CD8-positive, alpha-beta T cell (primary cell): ENCODE measurements at regions of chr15 and their contacts with region 1.

Region 1: DNA sequence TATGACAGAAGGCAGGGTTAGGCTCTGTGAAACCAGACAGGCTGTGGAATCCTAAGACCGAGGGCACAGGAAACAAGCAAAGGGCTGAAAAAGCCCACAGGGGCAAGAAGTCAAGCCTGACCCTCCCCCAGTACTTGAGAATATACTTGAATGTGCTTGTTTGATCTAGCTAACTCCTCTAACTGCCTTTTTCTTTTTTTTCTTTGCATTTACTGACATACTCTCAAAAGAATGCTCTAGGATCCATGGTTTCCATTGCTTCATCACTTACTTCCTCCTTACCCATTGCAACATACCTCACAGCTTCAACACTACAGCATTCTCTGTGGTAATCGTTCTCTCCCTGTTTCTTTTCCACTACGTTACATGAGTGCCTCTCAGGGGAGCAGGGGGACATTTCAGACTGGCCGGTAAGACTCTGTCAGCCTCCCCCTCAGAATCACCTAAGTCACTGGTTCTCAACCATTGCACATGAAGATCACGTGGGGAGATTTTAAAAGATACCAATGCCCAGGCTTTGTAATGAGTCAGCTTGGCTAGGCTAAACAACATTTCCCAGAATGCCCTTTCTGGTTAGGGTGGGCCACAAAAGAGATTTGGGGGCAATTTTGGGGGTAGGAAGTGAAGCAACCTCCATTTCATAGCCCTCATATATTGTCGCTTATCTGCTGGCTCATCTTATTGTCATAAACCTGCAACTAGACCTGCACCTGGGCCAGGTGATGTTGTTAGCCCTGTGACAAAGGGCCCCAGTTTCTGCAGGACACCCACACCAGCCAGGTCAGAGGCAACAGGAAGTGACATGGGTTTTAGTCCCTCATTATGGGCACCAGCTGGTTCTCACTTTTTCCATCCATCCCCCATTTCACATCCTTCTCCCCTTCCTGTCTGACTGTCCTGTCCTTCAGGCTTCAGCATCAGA is 24.6 kb upstream of the RSL24D1 start:
- DNase-seq: peak in 4 of 9 experiments; percentile 25 to 64 (median 36)
- ATAC-seq: peak; percentile 27
- H3K4me3 ChIP-seq: no peak overlapping the region
- H3K4me3 Mint-ChIP-seq: peak overlapping the region; percentile 0
- H3K27ac ChIP-seq: peak overlapping the region in 1 of 2 experiments; percentile 66
- H3K27ac Mint-ChIP-seq: peak overlapping the region; percentile 85
- H3K4me1 ChIP-seq: peaks cover 52% of the 10 kb centered on the region
- H3K4me1 Mint-ChIP-seq: peaks cover 59% of the 10 kb centered on the region
- H3K27me3 ChIP-seq: no peaks in the 10 kb centered on the region
- H3K27me3 Mint-ChIP-seq: no peaks in the 10 kb centered on the region
- CTCF ChIP-seq: no peak

Region 2: GRCh38 chr15:55008421-55008820 is 212.9 kb before region 1 on chr15:
- CTCF ChIA-PET with region 1: no interaction called
- POLR2A ChIA-PET with region 1: no interaction called
- intact Hi-C with region 1: no loop called
- DNase-seq: no peak
- ATAC-seq: no peak
- H3K4me3 ChIP-seq: no peak overlapping the region
- H3K4me3 Mint-ChIP-seq: no peak overlapping the region
- H3K27ac ChIP-seq: no peak overlapping the region
- H3K27ac Mint-ChIP-seq: no peak overlapping the region
- H3K4me1 ChIP-seq: no peaks in the 10 kb centered on the region
- H3K4me1 Mint-ChIP-seq: no peaks in the 10 kb centered on the region
- H3K27me3 ChIP-seq: no peaks in the 10 kb centered on the region
- H3K27me3 Mint-ChIP-seq: peaks cover 7% of the 10 kb centered on the region
- CTCF ChIP-seq: no peak

Region 3: GRCh38 chr15:55196458-55197361 is 24.6 kb before region 1 on chr15 and contains the start of gene RSL24D1:
- CTCF ChIA-PET with region 1: interaction called, 5 read pairs
- POLR2A ChIA-PET with region 1: interaction called, 14 read pairs
- intact Hi-C with region 1: loop called in 1 of 2 experiments (anchors 2 kb)
- DNase-seq: peak; percentile 92 to 100 (median 96)
- ATAC-seq: peak; percentile 95
- H3K4me3 ChIP-seq: peak within 1 kb of the TSS; percentile 82 to 90
- H3K4me3 Mint-ChIP-seq: no peak within 1 kb of the TSS
- H3K27ac ChIP-seq: peak within 1 kb of the TSS; percentile 94
- H3K27ac Mint-ChIP-seq: no peak within 1 kb of the TSS
- H3K4me1 ChIP-seq: peaks cover 37% of the 10 kb centered on the region
- H3K4me1 Mint-ChIP-seq: peaks cover 21% of the 10 kb centered on the region
- H3K27me3 ChIP-seq: no peaks in the 10 kb centered on the region
- H3K27me3 Mint-ChIP-seq: no peaks in the 10 kb centered on the region
- CTCF ChIP-seq: no peak
- total RNA-seq, gene RSL24D1: 181 to 186 TPM

Region 4: GRCh38 chr15:55241891-55242290 is 20.5 kb after region 1 on chr15:
- CTCF ChIA-PET with region 1: interaction called, 4 read pairs
- POLR2A ChIA-PET with region 1: interaction called, 4 read pairs
- intact Hi-C with region 1: loop called in 1 of 2 experiments (anchors 2 kb)
- DNase-seq: no peak
- ATAC-seq: no peak
- H3K4me3 ChIP-seq: no peak overlapping the region
- H3K4me3 Mint-ChIP-seq: no peak overlapping the region
- H3K27ac ChIP-seq: no peak overlapping the region
- H3K27ac Mint-ChIP-seq: no peak overlapping the region
- H3K4me1 ChIP-seq: peaks cover 18% of the 10 kb centered on the region
- H3K4me1 Mint-ChIP-seq: peaks cover 58% of the 10 kb centered on the region
- H3K27me3 ChIP-seq: no peaks in the 10 kb centered on the region
- H3K27me3 Mint-ChIP-seq: no peaks in the 10 kb centered on the region
- CTCF ChIP-seq: no peak

Region 5: DNA sequence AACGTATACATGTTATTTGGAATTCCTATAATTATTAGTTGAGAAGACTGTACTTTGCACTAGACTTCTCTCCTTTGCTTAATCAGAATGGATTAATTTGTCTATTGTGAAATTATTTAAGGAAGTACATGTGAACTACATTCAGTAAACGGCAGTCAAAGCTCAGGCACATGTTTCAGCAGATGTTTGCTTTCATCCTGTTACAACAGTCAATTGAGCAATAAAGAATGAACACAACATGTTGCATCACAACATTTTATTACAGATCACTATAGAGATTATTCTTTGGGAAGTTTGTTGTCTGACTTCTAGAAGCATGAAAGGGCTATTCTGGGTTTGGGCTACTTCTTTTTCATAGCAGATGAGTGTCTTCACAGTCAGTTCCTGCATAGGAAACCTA is 29.0 kb after region 1 on chr15:
- CTCF ChIA-PET with region 1: interaction called, 4 read pairs
- POLR2A ChIA-PET with region 1: interaction called, 4 read pairs
- intact Hi-C with region 1: loop called (anchors 5 kb)
- DNase-seq: peak in 1 of 9 experiments; percentile 32
- ATAC-seq: no peak
- H3K4me3 ChIP-seq: no peak overlapping the region
- H3K4me3 Mint-ChIP-seq: peak overlapping the region; percentile 44
- H3K27ac ChIP-seq: peak overlapping the region in 1 of 2 experiments; percentile 60
- H3K27ac Mint-ChIP-seq: peak overlapping the region; percentile 86
- H3K4me1 ChIP-seq: peaks cover 48% of the 10 kb centered on the region
- H3K4me1 Mint-ChIP-seq: peaks cover 75% of the 10 kb centered on the region
- H3K27me3 ChIP-seq: no peaks in the 10 kb centered on the region
- H3K27me3 Mint-ChIP-seq: no peaks in the 10 kb centered on the region
- CTCF ChIP-seq: no peak

Region 6: DNA sequence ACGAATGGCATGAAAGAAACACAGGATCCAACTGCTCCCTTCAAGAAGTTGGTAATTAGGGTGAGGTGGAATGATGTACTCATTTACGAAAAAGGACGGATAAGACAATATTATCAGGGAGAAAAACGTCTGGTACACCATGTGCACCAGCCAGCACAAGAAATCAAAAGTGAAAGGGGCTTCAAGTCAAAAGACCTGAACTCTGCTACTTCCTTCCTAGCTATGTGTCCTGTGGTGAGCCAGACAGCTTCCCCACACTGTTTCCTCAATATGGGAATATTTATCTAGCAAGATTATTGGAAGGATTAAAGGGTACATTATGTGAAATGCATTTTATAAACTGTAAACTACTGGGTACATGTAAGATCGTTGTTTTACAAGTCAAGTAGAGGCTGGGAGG is 34.4 kb after region 1 on chr15:
- CTCF ChIA-PET with region 1: interaction called, 4 read pairs
- POLR2A ChIA-PET with region 1: interaction called, 4 read pairs
- intact Hi-C with region 1: loop called (anchors 5 kb)
- DNase-seq: peak in 3 of 9 experiments; percentile 20 to 74 (median 56)
- ATAC-seq: peak; percentile 61
- H3K4me3 ChIP-seq: peak overlapping the region; percentile 34 to 50
- H3K4me3 Mint-ChIP-seq: peak overlapping the region; percentile 89
- H3K27ac ChIP-seq: peak overlapping the region; percentile 45 to 87
- H3K27ac Mint-ChIP-seq: peak overlapping the region; percentile 94
- H3K4me1 ChIP-seq: peaks cover 53% of the 10 kb centered on the region
- H3K4me1 Mint-ChIP-seq: peaks cover 79% of the 10 kb centered on the region
- H3K27me3 ChIP-seq: no peaks in the 10 kb centered on the region
- H3K27me3 Mint-ChIP-seq: no peaks in the 10 kb centered on the region
- CTCF ChIP-seq: no peak